Activated CD8-positive, alpha-beta T cell treated with anti-CD3 and anti-CD28 coated beads, Interleukin-2, amount 10 ng/mL, durations not matched to agents 7 days and 5 days (primary cell): ENCODE measurements at regions of chr14 and their contacts with region 1.

Region 1: GRCh38 chr14:106790189-106791036 is 1264.0 kb downstream of the TMEM121 start:
- DNase-seq: peak; percentile 87
- ATAC-seq: peak; percentile 86
- H3K4me3 Mint-ChIP-seq: no peak overlapping the region
- H3K27ac Mint-ChIP-seq: no peak overlapping the region
- H3K4me1 Mint-ChIP-seq: peaks cover 14% of the 10 kb centered on the region
- H3K27me3 Mint-ChIP-seq: peaks cover 35% of the 10 kb centered on the region

Region 2: GRCh38 chr14:106776395-106776983 is 13.9 kb before region 1 on chr14:
- CTCF ChIA-PET with region 1: interaction called, 25 read pairs
- POLR2A ChIA-PET with region 1: no interaction called
- DNase-seq: no peak
- ATAC-seq: no peak
- H3K4me3 Mint-ChIP-seq: no peak overlapping the region
- H3K27ac Mint-ChIP-seq: no peak overlapping the region
- H3K4me1 Mint-ChIP-seq: peaks cover 17% of the 10 kb centered on the region
- H3K27me3 Mint-ChIP-seq: peaks cover 5% of the 10 kb centered on the region

Region 3: GRCh38 chr14:106802423-106803364 is 12.3 kb after region 1 on chr14:
- CTCF ChIA-PET with region 1: interaction called, 10 read pairs
- POLR2A ChIA-PET with region 1: no interaction called
- DNase-seq: no peak
- ATAC-seq: no peak
- H3K4me3 Mint-ChIP-seq: no peak overlapping the region
- H3K27ac Mint-ChIP-seq: no peak overlapping the region
- H3K4me1 Mint-ChIP-seq: no peaks in the 10 kb centered on the region
- H3K27me3 Mint-ChIP-seq: peaks cover 65% of the 10 kb centered on the region

Region 4: GRCh38 chr14:106823552-106823951 is 33.1 kb after region 1 on chr14:
- CTCF ChIA-PET with region 1: interaction called, 16 read pairs
- POLR2A ChIA-PET with region 1: no interaction called
- DNase-seq: no peak
- ATAC-seq: no peak
- H3K4me3 Mint-ChIP-seq: no peak overlapping the region
- H3K27ac Mint-ChIP-seq: no peak overlapping the region
- H3K4me1 Mint-ChIP-seq: no peaks in the 10 kb centered on the region
- H3K27me3 Mint-ChIP-seq: peaks cover 33% of the 10 kb centered on the region

Region 5: GRCh38 chr14:106831322-106831720 is 40.9 kb after region 1 on chr14:
- CTCF ChIA-PET with region 1: interaction called, 19 read pairs
- POLR2A ChIA-PET with region 1: no interaction called
- DNase-seq: peak; percentile 70
- ATAC-seq: peak; percentile 48
- H3K4me3 Mint-ChIP-seq: no peak overlapping the region
- H3K27ac Mint-ChIP-seq: no peak overlapping the region
- H3K4me1 Mint-ChIP-seq: no peaks in the 10 kb centered on the region
- H3K27me3 Mint-ChIP-seq: peaks cover 39% of the 10 kb centered on the region

Region 6: DNA sequence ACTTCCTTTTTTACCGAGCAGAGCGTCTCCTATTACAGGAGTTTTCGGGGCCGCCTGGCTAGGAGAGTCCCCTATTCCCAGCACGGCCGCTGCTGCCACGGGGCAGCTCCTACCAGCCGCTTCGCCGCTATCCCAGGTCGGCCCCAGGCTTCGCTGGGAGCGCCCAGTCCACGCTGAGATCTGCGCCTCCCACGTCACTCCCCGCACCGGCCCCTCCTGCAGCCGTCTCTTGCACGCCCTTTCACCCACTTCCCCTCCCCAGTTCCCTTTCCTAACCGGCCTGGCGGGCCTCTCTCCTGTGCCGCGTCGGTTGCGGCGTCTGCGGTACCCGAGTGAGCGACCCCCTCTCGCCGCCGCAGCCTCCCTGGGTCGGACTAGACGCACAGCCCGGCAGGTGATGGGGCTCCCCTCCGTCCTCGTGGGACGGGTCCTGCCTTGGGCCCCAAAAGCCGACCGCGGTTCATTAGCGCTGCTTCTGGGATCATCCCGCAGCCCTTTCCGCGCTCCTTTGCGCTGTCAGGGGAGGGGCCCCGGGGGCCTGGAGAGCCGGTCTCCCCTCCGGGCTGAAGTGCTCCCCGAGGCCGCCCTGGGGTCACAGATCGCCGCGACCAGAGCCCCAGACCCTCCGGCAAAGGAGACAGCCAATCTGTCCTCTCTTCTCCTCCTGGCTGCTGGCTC is 54.3 kb after region 1 on chr14:
- CTCF ChIA-PET with region 1: interaction called, 14 read pairs
- POLR2A ChIA-PET with region 1: no interaction called
- DNase-seq: peak; percentile 70
- ATAC-seq: peak; percentile 77
- H3K4me3 Mint-ChIP-seq: peak overlapping the region; percentile 89
- H3K27ac Mint-ChIP-seq: peak overlapping the region; percentile 86
- H3K4me1 Mint-ChIP-seq: peaks cover 35% of the 10 kb centered on the region
- H3K27me3 Mint-ChIP-seq: peaks cover 9% of the 10 kb centered on the region

Region 7: DNA sequence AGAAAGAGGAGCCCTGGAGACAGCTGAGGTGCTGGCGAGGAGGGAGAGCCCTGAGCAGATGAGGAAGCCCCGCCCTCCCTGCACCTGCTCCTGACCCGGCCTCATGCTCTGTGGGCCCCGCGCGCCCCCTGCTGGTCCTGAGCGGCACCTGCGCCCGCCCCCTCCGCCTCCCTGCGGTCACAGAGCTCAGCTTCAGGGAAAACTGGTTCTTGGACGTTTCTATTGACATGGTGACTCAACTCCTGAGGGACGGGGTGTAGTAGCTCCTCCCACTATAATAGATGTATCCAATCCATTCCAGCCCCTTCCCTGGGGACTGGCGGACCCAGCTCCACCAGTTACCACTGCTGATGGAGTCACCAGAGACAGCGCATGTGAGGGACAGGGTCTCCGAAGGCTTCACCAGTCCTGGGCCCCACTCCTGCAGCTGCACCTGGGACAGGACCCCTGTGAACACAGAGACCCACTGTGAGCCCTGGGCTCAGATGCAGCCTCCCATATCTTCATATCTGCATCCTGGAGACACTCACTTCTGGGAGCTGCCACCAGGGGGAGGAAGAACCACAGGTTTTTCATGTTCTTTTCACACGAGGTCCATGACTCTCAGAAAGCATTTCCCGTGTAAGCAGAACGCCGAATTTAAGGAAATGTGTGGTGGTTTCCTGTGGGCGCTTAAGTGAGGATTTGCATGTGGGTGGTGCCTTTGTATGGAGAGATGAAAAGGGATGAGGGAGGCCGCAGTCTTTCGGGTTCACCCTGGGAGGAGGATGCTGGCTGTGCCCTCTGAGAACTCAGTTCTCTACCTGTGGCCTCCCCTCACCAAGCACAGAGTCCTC is 82.4 kb after region 1 on chr14:
- CTCF ChIA-PET with region 1: interaction called, 18 read pairs
- POLR2A ChIA-PET with region 1: interaction called, 3 read pairs
- DNase-seq: peak; percentile 88
- ATAC-seq: peak; percentile 86
- H3K4me3 Mint-ChIP-seq: peak overlapping the region; percentile 21
- H3K27ac Mint-ChIP-seq: no peak overlapping the region
- H3K4me1 Mint-ChIP-seq: peaks cover 29% of the 10 kb centered on the region
- H3K27me3 Mint-ChIP-seq: peaks cover 19% of the 10 kb centered on the region